ENCODE measurements at regions of chr15 and their contacts with region 1.

Region 1: GRCh38 chr15:100703032-100703578 is 100.7 kb downstream of the ASB7 start:
- DNase-seq: peak; percentile 92
- H3K4me3 ChIP-seq: no peak overlapping the region
- CTCF ChIP-seq: peak; percentile 12

Region 2: GRCh38 chr15:100778831-100779288 is 75.8 kb after region 1 on chr15:
- in situ Hi-C with region 1: no loop called
- DNase-seq: no peak
- H3K4me3 ChIP-seq: no peak overlapping the region
- CTCF ChIP-seq: no peak

Region 3: GRCh38 chr15:100849252-100850171 is 146.4 kb after region 1 on chr15:
- in situ Hi-C with region 1: loop called (anchors 10 kb)
- DNase-seq: no peak
- H3K4me3 ChIP-seq: peak overlapping the region; percentile 51
- CTCF ChIP-seq: no peak